Uterus (tissue), 4 donors: ENCODE measurements at regions of chr11 and their contacts with region 1.

Region 1: DNA sequence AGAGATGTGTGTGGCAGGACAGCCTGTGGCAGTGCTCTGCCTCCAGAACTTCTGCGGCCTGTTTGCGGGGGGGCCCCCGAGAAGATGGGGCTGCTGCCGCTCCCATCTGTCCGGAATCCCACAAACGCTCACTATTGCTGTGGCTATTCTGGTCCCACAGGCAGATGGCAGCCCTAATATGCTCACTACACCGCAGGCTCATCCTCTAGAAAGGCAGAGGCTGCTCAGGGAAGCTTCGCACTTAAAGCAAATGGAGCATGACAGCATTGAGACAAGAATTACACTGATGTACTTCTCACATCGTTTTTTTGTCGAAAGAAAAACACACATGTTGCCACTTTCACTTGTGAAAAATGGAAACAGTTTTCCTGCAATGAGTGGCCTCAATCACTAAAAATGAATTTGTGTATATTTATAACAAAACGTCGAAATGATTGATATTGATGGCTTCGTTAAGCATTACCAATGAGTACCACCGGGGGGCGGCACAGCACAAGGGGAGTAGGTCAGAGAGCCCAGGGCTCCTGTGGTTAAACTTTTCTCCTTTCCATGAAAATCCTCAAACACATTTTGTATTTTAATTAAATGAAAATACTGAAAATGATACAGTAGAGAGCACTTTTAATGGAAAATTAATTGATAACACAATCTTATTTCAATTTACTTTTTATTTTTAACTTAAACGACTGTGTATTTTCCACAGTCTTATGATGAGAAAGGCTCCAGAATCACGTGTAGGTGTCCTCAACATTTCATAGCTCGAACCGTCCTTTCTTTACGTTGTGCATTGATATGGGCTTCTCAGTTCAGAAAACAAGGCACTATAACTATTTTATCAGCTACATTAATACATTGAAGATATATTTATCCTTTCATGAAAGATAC is 69.1 kb downstream of the CTTN start:
- DNase-seq: peak in 1 of 2 donors; percentile 22
- H3K4me3 ChIP-seq: no peak overlapping the region
- H3K27ac ChIP-seq: no peak overlapping the region
- H3K4me1 ChIP-seq: no peaks in the 10 kb centered on the region
- H3K27me3 ChIP-seq: no peaks in the 10 kb centered on the region
- CTCF ChIP-seq: peak; percentile 56 to 73 (median 67)
- POLR2A ChIP-seq: no peak

Region 2: DNA sequence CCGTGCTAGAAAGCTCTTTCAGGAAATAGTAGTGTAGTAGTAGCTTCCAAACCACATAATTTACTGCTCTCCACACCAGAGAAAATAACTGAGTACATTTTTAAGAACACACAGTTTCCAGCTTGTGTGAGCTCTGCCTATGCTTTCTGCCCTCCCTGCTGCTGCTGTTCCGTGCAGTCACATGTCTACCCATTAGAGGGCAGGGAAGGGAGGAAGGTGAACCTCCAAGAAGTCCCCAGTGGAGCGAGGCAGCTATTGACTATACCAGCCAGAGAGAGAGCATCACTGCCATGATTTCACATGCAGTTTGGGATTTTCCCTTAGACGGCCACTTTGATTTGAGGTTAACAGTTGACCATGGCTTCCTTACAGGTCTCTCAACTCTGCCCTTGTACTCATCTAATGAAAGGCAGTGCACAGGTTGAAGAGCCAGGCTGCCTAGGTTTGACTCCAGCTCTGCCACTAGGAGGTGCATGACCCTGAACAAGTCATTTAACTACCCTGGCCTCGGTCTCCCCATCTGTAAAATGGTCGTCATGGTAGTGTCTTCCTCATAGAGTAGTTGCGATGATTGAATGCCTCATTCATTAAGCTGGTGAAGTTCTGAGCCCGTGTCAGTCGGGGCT is 88.8 kb before region 1 on chr11:
- intact Hi-C with region 1: no loop called
- DNase-seq: no peak
- H3K4me3 ChIP-seq: no peak overlapping the region
- H3K27ac ChIP-seq: peak overlapping the region in 1 of 2 donors; percentile 33
- H3K4me1 ChIP-seq: peaks cover 0 to 5% of the 10 kb centered on the region in 2 donors
- H3K27me3 ChIP-seq: no peaks in the 10 kb centered on the region
- CTCF ChIP-seq: no peak
- POLR2A ChIP-seq: no peak

Region 3: GRCh38 chr11:70763606-70764005 is 296.2 kb after region 1 on chr11:
- intact Hi-C with region 1: loop called (anchors 10 kb)
- DNase-seq: no peak
- H3K4me3 ChIP-seq: no peak overlapping the region
- H3K27ac ChIP-seq: no peak overlapping the region
- H3K4me1 ChIP-seq: no peaks in the 10 kb centered on the region
- H3K27me3 ChIP-seq: no peaks in the 10 kb centered on the region
- CTCF ChIP-seq: no peak
- POLR2A ChIP-seq: no peak

Region 4: GRCh38 chr11:70826541-70827335 is 359.3 kb after region 1 on chr11:
- intact Hi-C with region 1: no loop called
- DNase-seq: no peak
- H3K4me3 ChIP-seq: no peak overlapping the region
- H3K27ac ChIP-seq: no peak overlapping the region
- H3K4me1 ChIP-seq: no peaks in the 10 kb centered on the region
- H3K27me3 ChIP-seq: peaks cover 0 to 8% of the 10 kb centered on the region in 2 donors
- CTCF ChIP-seq: no peak
- POLR2A ChIP-seq: no peak